ENCODE measurements at regions of chr16 and their contacts with region 1.

Region 1: GRCh38 chr16:14285513-14286385 is 214.6 kb downstream of the MRTFB start:
- DNase-seq: peak; percentile 88 to 99 (median 96)
- ATAC-seq: peak; percentile 76
- H3K4me3 ChIP-seq: peak overlapping the region; percentile 99
- H3K4me3 Mint-ChIP-seq: peak overlapping the region; percentile 99
- H3K27ac ChIP-seq: peak overlapping the region; percentile 52 to 63
- H3K27ac Mint-ChIP-seq: peak overlapping the region; percentile 90
- H3K4me1 ChIP-seq: peaks cover 22% of the 10 kb centered on the region
- H3K4me1 Mint-ChIP-seq: peaks cover 23% of the 10 kb centered on the region
- H3K27me3 ChIP-seq: no peaks in the 10 kb centered on the region
- H3K27me3 Mint-ChIP-seq: peaks cover 14% of the 10 kb centered on the region
- CTCF ChIP-seq: no peak

Region 2: GRCh38 chr16:14070877-14071575 is 214.7 kb before region 1 on chr16 and contains the start of gene MRTFB:
- CTCF ChIA-PET with region 1: no interaction called
- POLR2A ChIA-PET with region 1: no interaction called
- intact Hi-C with region 1: loop called in 1 of 2 experiments (anchors 5 kb)
- DNase-seq: peak; percentile 63 to 90 (median 76)
- ATAC-seq: peak; percentile 90
- H3K4me3 ChIP-seq: peak within 1 kb of the TSS; percentile 84
- H3K4me3 Mint-ChIP-seq: peak within 1 kb of the TSS; percentile 93
- H3K27ac ChIP-seq: peak within 1 kb of the TSS in 1 of 2 donors; percentile 69
- H3K27ac Mint-ChIP-seq: peak within 1 kb of the TSS; percentile 82
- H3K4me1 ChIP-seq: peaks cover 17% of the 10 kb centered on the region
- H3K4me1 Mint-ChIP-seq: peaks cover 39% of the 10 kb centered on the region
- H3K27me3 ChIP-seq: peaks cover 0 to 3% of the 10 kb centered on the region in 2 experiments
- H3K27me3 Mint-ChIP-seq: no peaks in the 10 kb centered on the region
- CTCF ChIP-seq: no peak
- total RNA-seq, gene MRTFB: 18.0 to 19.4 TPM

Region 3: DNA sequence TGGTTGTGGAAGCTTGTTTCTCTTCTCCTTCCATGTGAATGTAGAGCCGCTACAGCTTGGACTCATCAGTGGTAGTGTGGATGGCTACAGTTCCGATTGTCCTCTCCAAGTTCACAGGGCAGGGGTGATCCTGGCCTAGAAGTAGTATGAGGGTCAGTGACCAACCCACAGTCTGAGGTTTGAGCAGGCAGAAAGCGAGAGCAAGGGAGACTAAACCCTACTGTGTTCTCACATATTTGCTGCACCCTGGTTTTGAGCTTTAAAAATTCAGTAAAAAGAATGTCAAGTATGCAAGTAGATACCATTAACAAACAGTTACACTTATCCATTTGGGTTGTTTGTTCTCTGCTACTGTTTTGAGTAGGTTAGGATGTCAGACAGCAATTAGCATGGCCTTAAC is 65.8 kb before region 1 on chr16:
- CTCF ChIA-PET with region 1: no interaction called
- POLR2A ChIA-PET with region 1: no interaction called
- intact Hi-C with region 1: no loop called
- DNase-seq: no peak
- ATAC-seq: no peak
- H3K4me3 ChIP-seq: no peak overlapping the region
- H3K4me3 Mint-ChIP-seq: no peak overlapping the region
- H3K27ac ChIP-seq: no peak overlapping the region
- H3K27ac Mint-ChIP-seq: no peak overlapping the region
- H3K4me1 ChIP-seq: no peaks in the 10 kb centered on the region
- H3K4me1 Mint-ChIP-seq: no peaks in the 10 kb centered on the region
- H3K27me3 ChIP-seq: no peaks in the 10 kb centered on the region
- H3K27me3 Mint-ChIP-seq: no peaks in the 10 kb centered on the region
- CTCF ChIP-seq: no peak

Region 4: DNA sequence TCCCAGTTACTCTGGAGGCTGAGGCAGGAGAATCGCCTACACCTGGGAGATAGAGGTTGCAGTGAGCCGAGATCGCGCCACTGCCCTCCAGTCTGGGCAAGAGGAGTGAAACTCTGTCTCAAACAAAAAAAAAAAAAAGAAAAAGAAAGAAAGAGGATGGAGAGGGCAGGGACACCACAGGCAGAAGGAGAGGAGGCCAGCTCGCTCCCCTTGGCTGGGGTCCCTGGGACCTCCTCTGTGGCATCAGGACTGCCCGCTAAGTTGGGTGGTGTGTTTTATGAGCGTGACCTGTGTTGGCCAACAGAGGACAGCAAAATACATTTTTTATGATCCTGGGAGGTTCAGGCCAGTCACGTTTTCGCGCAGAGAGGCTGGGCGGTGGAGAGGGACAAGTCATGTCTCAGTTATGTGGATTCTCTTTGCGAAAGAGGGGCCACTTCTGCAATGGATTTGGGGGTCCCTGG is 15.0 kb after region 1 on chr16:
- CTCF ChIA-PET with region 1: no interaction called
- POLR2A ChIA-PET with region 1: interaction called, 15 read pairs
- intact Hi-C with region 1: loop called in 1 of 2 experiments (anchors 2 kb)
- DNase-seq: peak in 6 of 14 experiments; percentile 15 to 63 (median 50)
- ATAC-seq: peak; percentile 59
- H3K4me3 ChIP-seq: no peak overlapping the region
- H3K4me3 Mint-ChIP-seq: peak overlapping the region; percentile 87
- H3K27ac ChIP-seq: no peak overlapping the region
- H3K27ac Mint-ChIP-seq: peak overlapping the region; percentile 61
- H3K4me1 ChIP-seq: peaks cover 20% of the 10 kb centered on the region
- H3K4me1 Mint-ChIP-seq: peaks cover 16% of the 10 kb centered on the region
- H3K27me3 ChIP-seq: peaks cover 13 to 14% of the 10 kb centered on the region in 2 experiments
- H3K27me3 Mint-ChIP-seq: peaks cover 9% of the 10 kb centered on the region
- CTCF ChIP-seq: peak; percentile 51

Region 5: GRCh38 chr16:14310519-14310991 is 24.8 kb after region 1 on chr16:
- CTCF ChIA-PET with region 1: interaction called, 3 read pairs
- POLR2A ChIA-PET with region 1: interaction called, 24 read pairs
- intact Hi-C with region 1: no loop called
- DNase-seq: no peak
- ATAC-seq: no peak
- H3K4me3 ChIP-seq: no peak overlapping the region
- H3K4me3 Mint-ChIP-seq: no peak overlapping the region
- H3K27ac ChIP-seq: no peak overlapping the region
- H3K27ac Mint-ChIP-seq: no peak overlapping the region
- H3K4me1 ChIP-seq: peaks cover 40% of the 10 kb centered on the region
- H3K4me1 Mint-ChIP-seq: peaks cover 47% of the 10 kb centered on the region
- H3K27me3 ChIP-seq: no peaks in the 10 kb centered on the region
- H3K27me3 Mint-ChIP-seq: no peaks in the 10 kb centered on the region
- CTCF ChIP-seq: no peak

Region 6: GRCh38 chr16:14354551-14355351 is 69.0 kb after region 1 on chr16:
- CTCF ChIA-PET with region 1: no interaction called
- POLR2A ChIA-PET with region 1: no interaction called
- intact Hi-C with region 1: no loop called
- DNase-seq: peak in 4 of 14 experiments; percentile 33 to 66 (median 49)
- ATAC-seq: peak; percentile 24
- H3K4me3 ChIP-seq: peak overlapping the region; percentile 40
- H3K4me3 Mint-ChIP-seq: peak overlapping the region; percentile 83
- H3K27ac ChIP-seq: no peak overlapping the region
- H3K27ac Mint-ChIP-seq: peak overlapping the region; percentile 46
- H3K4me1 ChIP-seq: peaks cover 9% of the 10 kb centered on the region
- H3K4me1 Mint-ChIP-seq: peaks cover 10% of the 10 kb centered on the region
- H3K27me3 ChIP-seq: no peaks in the 10 kb centered on the region
- H3K27me3 Mint-ChIP-seq: no peaks in the 10 kb centered on the region
- CTCF ChIP-seq: no peak

Region 7: DNA sequence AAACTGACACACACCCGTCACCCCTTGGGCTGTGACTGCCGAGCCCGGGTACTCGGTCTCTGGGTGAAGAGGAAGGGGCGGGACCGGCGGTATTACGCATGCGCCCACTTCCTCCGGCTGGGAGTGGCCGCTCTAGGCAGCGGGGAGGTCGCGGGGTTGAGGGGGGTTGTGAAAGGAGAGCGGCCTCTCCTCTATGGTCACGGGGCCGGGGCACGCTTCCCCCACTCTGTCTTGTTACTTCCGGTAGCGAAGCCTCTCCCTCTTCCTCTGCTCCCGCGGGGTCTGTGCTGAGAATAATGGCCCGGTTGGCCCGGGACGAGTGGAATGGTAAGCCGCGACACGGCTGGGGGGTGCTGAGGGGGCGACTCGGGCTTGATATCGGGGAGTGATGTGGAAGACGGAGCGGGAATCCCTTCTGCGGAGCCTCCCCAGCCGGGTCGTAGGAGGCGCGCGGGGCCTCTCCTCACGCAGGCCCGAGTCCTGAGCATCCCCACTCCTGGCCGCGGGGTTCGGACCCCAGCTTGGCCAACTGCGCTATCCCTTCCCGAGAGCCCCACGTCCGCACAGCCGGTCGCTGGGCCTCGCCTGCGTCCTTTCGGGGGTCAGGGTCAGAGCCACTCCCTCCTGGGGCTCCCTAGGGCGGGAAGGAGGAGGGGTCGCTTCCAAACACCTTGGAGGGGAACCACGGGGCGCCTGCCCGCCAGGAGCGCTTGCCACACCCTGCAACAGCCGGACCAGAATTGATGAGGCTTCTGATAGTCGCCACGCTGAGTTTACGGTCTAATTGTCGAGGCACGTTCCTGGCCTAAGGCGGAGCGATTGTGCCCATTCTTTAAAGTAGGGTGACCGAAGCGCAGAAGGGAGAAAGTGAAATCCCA is 347.2 kb after region 1 on chr16 and contains the start of gene BFAR:
- CTCF ChIA-PET with region 1: no interaction called
- POLR2A ChIA-PET with region 1: interaction called, 7 read pairs
- intact Hi-C with region 1: loop called in 1 of 2 experiments (anchors 10 kb)
- DNase-seq: peak; percentile 98 to 100 (median 99)
- ATAC-seq: peak; percentile 70
- H3K4me3 ChIP-seq: peak within 1 kb of the TSS; percentile 98
- H3K4me3 Mint-ChIP-seq: peak within 1 kb of the TSS; percentile 100
- H3K27ac ChIP-seq: peak within 1 kb of the TSS; percentile 82 to 92
- H3K27ac Mint-ChIP-seq: peak within 1 kb of the TSS; percentile 93
- H3K4me1 ChIP-seq: peaks cover 65% of the 10 kb centered on the region
- H3K4me1 Mint-ChIP-seq: peaks cover 64% of the 10 kb centered on the region
- H3K27me3 ChIP-seq: no peaks in the 10 kb centered on the region
- H3K27me3 Mint-ChIP-seq: no peaks in the 10 kb centered on the region
- CTCF ChIP-seq: no peak
- total RNA-seq, gene BFAR: 36.9 to 37.6 TPM